HCT116 (cell line): ENCODE measurements at regions of chr7 and their contacts with region 1.

Region 1: DNA sequence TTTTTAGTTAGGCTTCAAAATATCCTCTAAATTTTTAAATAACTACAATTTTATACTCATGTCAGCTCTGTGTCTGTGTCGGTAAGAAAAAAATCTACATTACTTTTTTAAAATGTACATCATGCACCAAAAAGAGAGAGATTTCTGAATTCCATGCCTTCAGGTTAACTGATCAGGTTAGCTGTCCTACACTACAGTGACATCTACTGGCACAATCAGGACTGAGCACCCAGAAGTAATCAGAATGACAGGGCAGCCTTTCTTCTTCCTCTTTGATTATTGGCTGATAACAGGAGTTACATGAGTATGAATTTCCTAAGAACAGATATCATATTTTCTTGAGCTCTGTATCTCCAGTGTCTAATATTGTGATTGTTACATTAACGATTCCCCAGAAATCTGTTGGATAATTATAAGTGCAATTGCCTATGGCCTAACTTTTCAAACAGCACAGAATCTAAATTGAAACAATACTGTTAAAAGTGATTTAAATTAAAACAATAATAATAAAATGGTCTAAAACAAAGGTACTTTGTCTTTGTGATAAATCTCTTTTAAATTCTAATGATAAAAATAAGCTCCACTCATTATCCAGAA is 41.8 kb upstream of the HYCC1 start:
- DNase-seq: peak; percentile 64
- ATAC-seq: peak; percentile 96
- H3K4me3 ChIP-seq: no peak overlapping the region
- H3K27ac ChIP-seq: no peak overlapping the region
- H3K4me1 ChIP-seq: peaks cover 0 to 8% of the 10 kb centered on the region in 2 experiments; a peak in 2 of 4 replicates
- H3K27me3 ChIP-seq: no peaks in the 10 kb centered on the region
- CTCF ChIP-seq: peak; percentile 85 to 96 (median 90)
- POLR2A ChIP-seq: no peak
- RAD21 ChIP-seq: peak; percentile 95

Region 2: GRCh38 chr7:22726345-22727185 is 329.1 kb before region 1 on chr7:
- CTCF ChIA-PET with region 1: interaction called, 21 read pairs
- POLR2A ChIA-PET with region 1: no interaction called
- RAD21 ChIA-PET with region 1: no interaction called
- intact Hi-C with region 1: loop called (anchors 1 kb)
- DNase-seq: peak; percentile 37
- ATAC-seq: peak; percentile 92
- H3K4me3 ChIP-seq: no peak overlapping the region
- H3K27ac ChIP-seq: no peak overlapping the region
- H3K4me1 ChIP-seq: peaks cover 0 to 12% of the 10 kb centered on the region in 2 experiments; a peak in 1 of 4 replicates
- H3K27me3 ChIP-seq: no peaks in the 10 kb centered on the region
- CTCF ChIP-seq: peak; percentile 56 to 75 (median 62)
- POLR2A ChIP-seq: no peak
- RAD21 ChIP-seq: peak; percentile 75

Region 3: DNA sequence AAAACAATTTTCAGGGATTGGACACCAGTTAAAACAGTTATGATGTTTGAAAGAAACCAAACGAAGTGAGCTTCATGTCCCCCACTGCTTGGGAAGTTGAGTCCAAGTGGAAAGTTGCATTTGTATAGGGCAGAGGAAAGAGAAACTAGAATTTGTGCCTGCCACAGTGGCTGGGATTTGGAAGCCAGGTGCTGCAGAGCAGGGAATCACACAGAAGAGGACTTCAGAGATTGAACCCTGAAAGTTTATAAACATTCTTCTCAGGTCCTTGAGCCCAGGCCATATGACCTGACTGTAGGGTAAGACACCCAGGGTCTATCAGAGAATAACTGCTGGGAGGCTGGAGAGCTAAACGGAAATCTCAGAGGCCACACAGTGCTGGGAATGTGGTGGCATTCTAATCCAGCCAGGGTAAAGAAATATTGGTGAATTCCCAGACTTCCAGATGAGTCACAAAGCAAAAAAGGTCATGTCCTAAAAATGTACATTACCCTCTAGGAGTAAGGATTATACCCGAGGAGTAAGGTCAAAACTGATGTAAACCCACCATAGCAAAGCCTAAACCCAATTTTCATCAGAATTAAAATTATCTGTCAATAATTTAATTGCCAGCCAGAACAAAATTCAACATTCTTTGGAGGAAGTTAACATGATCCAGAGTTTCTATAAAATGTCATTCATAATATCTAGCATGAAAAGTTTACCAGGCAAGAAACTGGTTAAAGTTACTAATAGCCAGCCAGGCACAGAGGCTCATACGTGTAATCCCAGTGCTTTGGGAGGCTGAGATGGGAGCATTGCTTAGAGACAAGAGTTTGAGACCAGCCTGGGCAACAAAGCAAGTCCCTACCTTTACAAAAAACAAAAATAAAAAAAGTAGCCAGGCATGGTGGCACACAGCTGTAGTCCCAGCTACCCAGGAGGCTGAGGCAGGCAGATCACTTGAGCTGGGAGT is 264.2 kb before region 1 on chr7:
- CTCF ChIA-PET with region 1: no interaction called
- POLR2A ChIA-PET with region 1: no interaction called
- RAD21 ChIA-PET with region 1: no interaction called
- intact Hi-C with region 1: no loop called
- DNase-seq: no peak
- ATAC-seq: peak; percentile 40; the same call in 1 of the 2 replicates
- H3K4me3 ChIP-seq: no peak overlapping the region
- H3K27ac ChIP-seq: no peak overlapping the region
- H3K4me1 ChIP-seq: peaks cover 3 to 10% of the 10 kb centered on the region in 2 experiments; a peak in 2 of 4 replicates
- H3K27me3 ChIP-seq: no peaks in the 10 kb centered on the region
- CTCF ChIP-seq: no peak
- POLR2A ChIP-seq: no peak
- RAD21 ChIP-seq: no peak

Region 4: DNA sequence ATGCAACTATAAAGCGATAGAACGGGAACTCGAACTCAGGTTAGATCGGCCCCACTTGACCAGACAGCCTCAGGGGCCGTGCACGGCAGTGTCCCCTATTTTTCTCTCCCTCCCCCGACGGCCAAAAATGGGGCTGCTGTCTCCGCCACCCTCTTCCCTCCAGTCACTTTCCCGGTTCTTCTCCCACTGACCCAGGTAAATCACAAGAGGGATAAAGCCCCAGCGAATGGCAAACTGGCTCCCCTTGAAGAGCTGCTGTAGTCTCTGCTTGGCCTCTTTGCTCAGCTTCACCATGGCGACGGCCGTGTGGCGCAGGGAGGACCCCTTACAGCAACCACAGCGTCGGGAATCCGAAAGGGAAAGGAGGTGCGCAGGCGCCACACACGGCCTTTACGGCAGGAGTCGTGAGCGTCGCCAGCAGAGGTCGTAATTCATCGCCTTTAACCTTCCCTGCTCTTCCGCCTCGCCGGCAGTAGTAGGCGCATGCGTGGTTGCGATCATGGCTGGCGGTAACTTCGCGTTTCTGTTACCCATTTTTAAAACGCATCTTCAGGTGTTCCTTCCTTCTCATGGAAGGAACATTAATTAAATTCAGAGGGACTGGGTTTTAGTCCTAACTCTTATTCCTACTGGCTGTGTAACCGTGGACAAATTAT is 233.1 kb before region 1 on chr7 and contains the start of gene TOMM7:
- CTCF ChIA-PET with region 1: interaction called, 3 read pairs
- POLR2A ChIA-PET with region 1: no interaction called
- RAD21 ChIA-PET with region 1: no interaction called
- intact Hi-C with region 1: loop called (anchors 1 kb)
- DNase-seq: peak; percentile 95
- ATAC-seq: peak; percentile 89
- H3K4me3 ChIP-seq: peak within 1 kb of the TSS; percentile 61 to 90
- H3K27ac ChIP-seq: peak within 1 kb of the TSS; percentile 79
- H3K4me1 ChIP-seq: peaks cover 0 to 20% of the 10 kb centered on the region in 2 experiments; a peak in 3 of 4 replicates
- H3K27me3 ChIP-seq: no peaks in the 10 kb centered on the region
- CTCF ChIP-seq: no peak
- POLR2A ChIP-seq: peak; percentile 71
- RAD21 ChIP-seq: no peak
- total RNA-seq, gene TOMM7: 325 TPM

Region 5: DNA sequence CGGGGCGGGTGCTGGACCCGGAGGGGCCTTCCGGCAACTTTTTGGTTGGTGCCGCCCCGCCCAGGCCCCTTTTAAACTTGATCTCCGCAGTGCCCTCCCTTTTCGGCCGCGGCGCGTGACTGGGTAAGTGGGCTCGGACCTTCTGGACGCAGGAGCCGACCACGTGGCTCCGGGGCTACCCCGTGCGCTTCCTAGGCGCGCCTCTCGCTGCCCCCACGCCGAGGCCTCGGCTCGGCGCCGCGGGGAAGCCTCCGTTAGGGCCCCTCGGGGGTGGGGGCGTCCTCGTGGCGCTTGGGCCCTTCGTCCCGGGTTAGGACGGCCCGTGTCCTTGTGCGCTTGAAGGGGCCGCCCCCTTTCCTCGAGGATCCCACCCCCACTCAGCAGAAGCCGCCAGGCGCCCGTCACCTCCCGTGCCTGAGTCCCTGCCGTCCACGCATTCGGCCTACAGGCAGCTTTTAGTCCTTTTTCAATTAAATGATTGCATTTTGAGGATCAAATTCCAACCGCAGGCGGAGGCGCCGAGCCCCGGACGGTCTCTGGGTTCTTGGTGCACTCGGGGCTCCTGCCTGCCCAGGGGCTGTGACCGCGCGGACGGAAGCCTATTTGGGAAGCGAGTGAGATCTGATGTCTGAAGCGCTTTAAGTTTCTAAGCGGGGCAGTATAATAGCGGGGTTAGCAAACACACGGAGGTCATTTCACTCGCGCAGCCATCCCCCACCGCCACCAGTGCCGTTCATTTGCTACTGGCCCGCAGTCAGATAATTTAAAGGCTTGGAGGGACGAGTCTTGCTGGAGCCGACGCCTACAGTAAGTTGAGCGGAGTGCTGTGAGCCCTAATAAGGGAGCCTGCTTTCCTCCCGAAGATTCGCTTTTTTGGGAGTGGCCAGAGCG is 201.3 kb before region 1 on chr7:
- CTCF ChIA-PET with region 1: interaction called, 6 read pairs
- POLR2A ChIA-PET with region 1: no interaction called
- RAD21 ChIA-PET with region 1: interaction called in 1 of 2 experiments, 3 read pairs
- intact Hi-C with region 1: loop called (anchors 2 kb)
- DNase-seq: peak; percentile 80
- ATAC-seq: peak; percentile 76
- H3K4me3 ChIP-seq: peak overlapping the region; percentile 62 to 89
- H3K27ac ChIP-seq: peak overlapping the region; percentile 97
- H3K4me1 ChIP-seq: peaks cover 37 to 55% of the 10 kb centered on the region in 2 experiments
- H3K27me3 ChIP-seq: no peaks in the 10 kb centered on the region
- CTCF ChIP-seq: no peak; a peak in 1 of 6 replicates
- POLR2A ChIP-seq: peak; percentile 20
- RAD21 ChIP-seq: no peak